Ovary (tissue), 10 donors: ENCODE measurements at regions of chr6 and their contacts with region 1.

Region 1: GRCh38 chr6:70694371-70694770 is 26.7 kb downstream of the SMAP1 start:
- DNase-seq: no peak
- H3K4me3 ChIP-seq: no peak overlapping the region
- H3K27ac ChIP-seq: no peak overlapping the region
- H3K4me1 ChIP-seq: no peaks in the 10 kb centered on the region
- H3K27me3 ChIP-seq: no peaks in the 10 kb centered on the region
- CTCF ChIP-seq: no peak
- EP300 ChIP-seq: no peak
- POLR2A ChIP-seq: no peak

Region 2: DNA sequence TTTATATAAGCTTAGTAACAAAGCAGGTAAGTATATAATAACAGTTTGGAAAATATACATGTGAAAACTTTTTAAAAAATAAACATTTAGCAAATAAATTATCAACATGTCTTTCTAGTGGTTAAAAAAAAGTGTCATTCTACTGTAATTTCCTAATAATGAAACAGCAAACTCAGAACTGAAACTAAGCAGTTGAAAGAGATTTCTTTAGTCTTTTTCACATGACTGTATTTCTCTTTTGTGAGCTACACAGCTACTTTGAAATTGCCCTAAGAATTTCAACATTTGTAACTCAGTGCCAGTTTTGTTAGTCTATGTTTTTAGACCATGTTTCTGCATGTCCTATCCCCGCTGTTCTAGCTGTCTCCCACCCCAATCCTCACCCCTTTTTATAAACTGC is 156.0 kb before region 1 on chr6:
- intact Hi-C with region 1: no loop called
- DNase-seq: no peak
- H3K4me3 ChIP-seq: no peak overlapping the region
- H3K27ac ChIP-seq: no peak overlapping the region
- H3K4me1 ChIP-seq: no peaks in the 10 kb centered on the region
- H3K27me3 ChIP-seq: no peaks in the 10 kb centered on the region
- CTCF ChIP-seq: no peak
- EP300 ChIP-seq: no peak
- POLR2A ChIP-seq: no peak

Region 3: DNA sequence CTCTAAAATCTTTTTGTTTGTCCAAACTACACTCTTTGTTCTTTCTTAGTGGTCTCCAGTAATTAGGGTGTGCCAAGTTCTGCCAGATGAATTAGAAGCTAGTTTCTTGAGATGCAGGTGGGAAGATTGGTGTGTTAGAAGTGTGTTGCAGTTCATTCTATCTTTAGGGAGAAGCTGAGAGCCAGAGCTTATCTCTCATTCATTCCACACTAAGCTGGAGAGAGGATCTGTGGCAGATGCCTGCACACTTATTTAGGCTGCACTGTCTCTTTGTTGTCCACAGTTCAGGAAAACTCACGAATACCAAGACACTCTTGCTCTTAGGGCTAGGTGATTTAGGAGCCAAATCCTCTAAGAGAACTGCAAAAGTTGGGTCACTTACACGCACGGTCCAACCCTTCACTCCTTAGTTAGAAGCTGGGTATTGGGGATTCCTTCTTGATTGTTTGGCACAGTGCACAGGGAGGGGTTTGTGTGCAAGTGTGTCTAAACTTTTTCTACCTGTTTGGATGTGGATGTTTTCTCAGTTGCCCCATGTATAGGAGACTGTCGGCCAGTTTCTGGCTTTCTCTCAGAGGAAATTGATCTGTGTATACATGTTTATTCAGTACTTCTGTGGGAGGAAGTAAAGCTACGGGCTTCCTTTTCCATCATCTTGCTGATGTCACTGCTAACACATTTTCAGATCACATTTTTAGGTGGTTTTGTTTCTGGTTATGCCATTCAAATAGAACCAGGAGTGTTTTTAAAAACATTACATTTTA is 22.8 kb after region 1 on chr6:
- intact Hi-C with region 1: loop called in 1 of 4 experiments (anchors 2 kb)
- DNase-seq: no peak
- H3K4me3 ChIP-seq: no peak overlapping the region
- H3K27ac ChIP-seq: no peak overlapping the region
- H3K4me1 ChIP-seq: no peaks in the 10 kb centered on the region
- H3K27me3 ChIP-seq: no peaks in the 10 kb centered on the region
- CTCF ChIP-seq: no peak
- EP300 ChIP-seq: no peak
- POLR2A ChIP-seq: no peak